Activated T-helper 1 cell treated with anti-CD3 and anti-CD28 coated beads, Interleukin-12 subunit alpha, Interleukin-12 subunit beta, Interleukin-2, Interleukin-4 antibody, amounts not matched to agents 30 ng/mL and 10 ng/mL and 1 ng/mL, durations not matched to agents 14 hours and 24 hours and 36 hours (primary cell): ENCODE measurements at regions of chr3 and their contacts with region 1.

Region 1: DNA sequence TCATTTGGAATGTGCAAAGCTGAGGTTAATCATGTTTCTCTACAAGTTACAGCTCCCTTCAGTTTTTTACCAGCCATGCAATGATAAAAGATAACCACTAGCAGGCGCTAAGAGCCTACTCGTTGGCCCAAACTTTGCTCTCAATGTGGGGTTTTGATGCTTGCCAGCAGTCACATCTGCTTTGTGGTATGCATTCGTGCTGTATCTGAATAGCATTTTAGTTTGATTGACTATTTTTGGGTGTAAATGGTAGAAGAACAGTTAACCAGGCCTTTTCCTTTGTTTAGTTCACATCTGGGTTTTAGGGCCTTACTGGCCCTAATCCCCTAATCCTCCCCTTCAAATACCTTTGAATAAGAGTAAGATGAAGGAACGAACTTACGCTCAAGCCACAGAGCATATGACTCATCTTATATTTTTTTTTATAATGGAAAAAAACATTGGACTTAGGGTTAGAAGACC is 4.4 kb upstream of the CLDN11 start:
- DNase-seq: peak; percentile 17
- H3K4me3 Mint-ChIP-seq: no peak overlapping the region
- H3K27ac Mint-ChIP-seq: no peak overlapping the region
- H3K4me1 Mint-ChIP-seq: peaks cover 5% of the 10 kb centered on the region
- H3K27me3 Mint-ChIP-seq: peaks cover 37% of the 10 kb centered on the region

Region 2: DNA sequence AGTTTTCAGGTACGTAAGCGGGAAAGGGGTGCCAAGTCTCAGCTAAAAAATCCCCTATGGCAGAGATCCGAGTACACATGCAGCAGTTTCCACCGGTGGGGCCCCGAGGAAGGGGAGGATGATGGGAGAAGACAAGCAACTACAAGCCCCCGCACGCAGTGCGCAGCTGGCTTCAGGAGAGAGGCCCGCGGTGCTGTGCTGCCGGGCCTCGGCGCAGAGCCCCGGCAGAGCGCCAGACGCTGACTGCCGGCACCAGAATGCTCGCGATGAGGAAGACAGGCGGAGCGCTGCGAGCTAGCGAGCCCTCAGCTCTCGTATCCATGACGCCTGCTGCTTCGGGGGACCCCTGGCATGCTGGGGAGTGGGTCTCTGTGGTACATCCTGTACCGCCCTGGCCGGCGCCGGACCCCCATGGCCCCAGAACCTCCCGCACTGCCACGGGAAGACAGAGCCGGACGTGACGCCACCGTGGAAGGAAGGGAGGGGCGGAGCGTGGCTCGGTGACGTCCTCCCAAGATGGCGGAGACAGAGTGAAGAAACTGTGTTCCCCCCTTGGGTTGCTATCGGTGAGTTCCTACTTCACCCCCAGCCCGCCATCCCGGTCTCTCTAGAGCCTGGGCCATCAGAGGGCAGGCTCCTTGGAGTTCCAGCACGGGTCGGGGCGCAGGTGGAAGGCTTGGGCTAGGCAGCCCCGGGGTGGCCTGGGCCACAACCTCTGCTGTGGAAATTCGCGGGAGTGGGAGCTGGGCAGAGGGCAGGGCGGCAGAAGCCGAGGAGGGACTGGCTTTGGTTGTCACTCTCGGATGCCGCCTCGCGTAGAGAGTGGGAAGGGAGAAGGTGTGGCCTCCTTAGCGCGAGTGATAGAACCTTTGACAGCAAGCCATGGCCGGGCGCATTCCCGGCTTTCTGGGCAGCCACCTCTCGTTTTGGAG is 641.1 kb before region 1 on chr3 and contains the start of gene MYNN:
- intact Hi-C with region 1: no loop called
- DNase-seq: peak; percentile 91
- H3K4me3 Mint-ChIP-seq: peak within 1 kb of the TSS; percentile 97
- H3K27ac Mint-ChIP-seq: peak within 1 kb of the TSS; percentile 99
- H3K4me1 Mint-ChIP-seq: peaks cover 56% of the 10 kb centered on the region
- H3K27me3 Mint-ChIP-seq: peaks cover 5% of the 10 kb centered on the region
- total RNA-seq, gene MYNN: 14.5 and 16.8 TPM in 2 replicates

Region 3: GRCh38 chr3:170189398-170190256 is 224.6 kb before region 1 on chr3:
- intact Hi-C with region 1: loop called (anchors 1 kb)
- DNase-seq: no peak
- H3K4me3 Mint-ChIP-seq: no peak overlapping the region
- H3K27ac Mint-ChIP-seq: no peak overlapping the region
- H3K4me1 Mint-ChIP-seq: peaks cover 15% of the 10 kb centered on the region
- H3K27me3 Mint-ChIP-seq: peaks cover 15% of the 10 kb centered on the region

Region 4: DNA sequence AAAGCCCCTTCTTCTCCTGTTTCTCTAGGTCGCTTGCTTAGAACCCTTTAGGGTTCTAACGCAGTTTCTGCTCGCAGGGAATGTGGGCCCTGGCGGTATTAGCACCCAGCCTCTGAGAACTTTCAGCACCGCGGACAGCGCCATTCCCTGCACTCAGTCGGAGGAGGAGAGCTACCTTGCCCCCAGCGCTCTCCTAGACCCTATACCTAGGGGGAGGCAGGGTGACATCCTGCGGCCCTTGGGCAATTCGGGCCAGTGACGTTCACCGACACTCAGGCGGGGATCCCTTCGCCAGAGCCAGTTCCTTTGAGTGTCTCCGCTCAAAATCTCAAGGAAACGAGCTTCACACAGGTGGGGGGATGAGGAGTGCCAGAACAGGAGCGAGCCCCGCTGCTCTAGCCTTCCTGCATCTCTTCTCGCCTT is 170.4 kb after region 1 on chr3:
- intact Hi-C with region 1: loop called (anchors 5 kb)
- DNase-seq: peak; percentile 11
- H3K4me3 Mint-ChIP-seq: no peak overlapping the region
- H3K27ac Mint-ChIP-seq: no peak overlapping the region
- H3K4me1 Mint-ChIP-seq: no peaks in the 10 kb centered on the region
- H3K27me3 Mint-ChIP-seq: peaks cover 38% of the 10 kb centered on the region

Region 5: GRCh38 chr3:170811928-170812591 is 397.8 kb after region 1 on chr3:
- intact Hi-C with region 1: loop called (anchors 1 kb)
- DNase-seq: peak; percentile 49
- H3K4me3 Mint-ChIP-seq: no peak overlapping the region
- H3K27ac Mint-ChIP-seq: no peak overlapping the region
- H3K4me1 Mint-ChIP-seq: peaks cover 6% of the 10 kb centered on the region
- H3K27me3 Mint-ChIP-seq: peaks cover 10% of the 10 kb centered on the region